ENCODE measurements at regions of chr17 and their contacts with region 1.

Region 1: DNA sequence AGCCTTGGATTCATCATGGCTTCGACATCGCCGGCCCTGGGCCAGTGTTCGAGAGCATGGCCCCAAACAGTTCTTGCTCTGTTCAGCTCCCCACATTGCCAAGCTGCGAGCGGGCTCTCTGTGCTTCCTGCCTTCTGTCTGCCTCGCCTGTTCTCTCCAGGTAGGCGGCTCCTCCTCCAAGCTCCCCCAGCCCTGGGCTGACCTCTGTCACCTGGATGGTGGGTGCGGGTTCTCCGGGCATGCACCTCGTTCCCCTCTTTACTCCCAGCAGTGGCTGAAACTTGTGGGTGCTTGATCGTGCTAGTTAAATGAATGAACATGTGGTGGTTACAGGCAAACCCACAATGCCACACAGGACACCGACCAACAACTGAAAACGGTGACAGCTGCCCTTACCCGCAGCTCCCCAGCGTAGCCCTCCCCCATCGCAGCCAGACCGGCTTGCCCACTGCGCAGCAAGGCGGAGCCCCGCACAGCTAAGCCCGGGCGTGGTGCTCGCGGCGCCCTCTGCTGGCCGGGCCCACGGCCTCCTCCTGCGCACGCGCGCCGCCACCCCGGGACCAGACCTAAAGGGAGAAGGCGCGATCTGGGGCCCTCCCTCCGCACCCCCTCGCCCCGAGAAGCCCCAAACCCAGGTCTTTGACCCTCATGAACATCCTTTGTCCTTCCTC is 23.0 kb upstream of the EIF1 start:
- DNase-seq: peak; percentile 91
- ATAC-seq: peak; percentile 89
- H3K4me3 Mint-ChIP-seq: peak overlapping the region; percentile 82
- H3K27ac Mint-ChIP-seq: peak overlapping the region; percentile 93
- H3K4me1 Mint-ChIP-seq: peaks cover 38% of the 10 kb centered on the region
- H3K27me3 Mint-ChIP-seq: peaks cover 17% of the 10 kb centered on the region

Region 2: DNA sequence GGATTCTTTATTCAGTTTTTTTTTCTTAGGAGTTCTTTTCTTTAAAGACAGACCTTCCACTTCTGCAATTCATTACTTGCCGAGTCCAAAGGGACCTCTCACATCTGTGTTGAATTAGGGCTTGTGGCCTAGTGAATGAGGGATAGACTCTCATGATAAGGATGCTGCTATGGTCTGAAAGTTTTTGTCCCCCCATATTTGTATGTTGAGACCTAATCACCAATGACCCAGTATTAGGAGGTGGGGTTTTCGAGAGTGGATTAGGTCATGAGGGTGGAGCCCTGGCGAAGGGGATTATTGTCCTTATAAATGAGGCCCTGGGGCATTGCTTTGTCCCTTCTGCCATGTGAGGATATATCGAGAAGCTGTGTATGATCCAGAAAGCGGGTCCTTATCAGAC is 808.2 kb before region 1 on chr17:
- CTCF ChIA-PET with region 1: interaction called, 23 read pairs
- POLR2A ChIA-PET with region 1: no interaction called
- DNase-seq: no peak
- ATAC-seq: no peak
- H3K4me3 Mint-ChIP-seq: no peak overlapping the region
- H3K27ac Mint-ChIP-seq: no peak overlapping the region
- H3K4me1 Mint-ChIP-seq: no peaks in the 10 kb centered on the region
- H3K27me3 Mint-ChIP-seq: peaks cover 21% of the 10 kb centered on the region

Region 3: DNA sequence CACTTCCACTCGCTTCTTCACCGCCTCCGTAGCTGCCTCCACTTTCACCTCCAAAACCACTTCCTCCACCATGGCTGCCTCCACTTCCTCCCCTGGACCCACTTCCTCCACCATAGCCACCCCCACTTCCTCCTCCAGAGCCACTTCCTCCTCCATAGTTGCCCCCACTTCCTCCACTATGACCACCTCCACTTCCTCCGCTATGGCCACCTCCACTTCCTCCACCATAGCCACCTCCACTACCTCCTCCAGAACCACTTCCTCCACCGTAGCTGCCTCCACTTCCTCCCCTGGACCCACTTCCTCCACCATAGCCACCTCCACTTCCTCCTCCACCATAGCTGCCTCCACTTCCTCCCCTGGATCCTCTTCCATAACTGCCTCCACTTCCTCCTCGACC is 98.4 kb before region 1 on chr17:
- CTCF ChIA-PET with region 1: interaction called, 11 read pairs
- POLR2A ChIA-PET with region 1: no interaction called
- DNase-seq: peak; percentile 28
- ATAC-seq: no peak
- H3K4me3 Mint-ChIP-seq: no peak overlapping the region
- H3K27ac Mint-ChIP-seq: peak overlapping the region; percentile 87
- H3K4me1 Mint-ChIP-seq: peaks cover 8% of the 10 kb centered on the region
- H3K27me3 Mint-ChIP-seq: peaks cover 26% of the 10 kb centered on the region

Region 4: DNA sequence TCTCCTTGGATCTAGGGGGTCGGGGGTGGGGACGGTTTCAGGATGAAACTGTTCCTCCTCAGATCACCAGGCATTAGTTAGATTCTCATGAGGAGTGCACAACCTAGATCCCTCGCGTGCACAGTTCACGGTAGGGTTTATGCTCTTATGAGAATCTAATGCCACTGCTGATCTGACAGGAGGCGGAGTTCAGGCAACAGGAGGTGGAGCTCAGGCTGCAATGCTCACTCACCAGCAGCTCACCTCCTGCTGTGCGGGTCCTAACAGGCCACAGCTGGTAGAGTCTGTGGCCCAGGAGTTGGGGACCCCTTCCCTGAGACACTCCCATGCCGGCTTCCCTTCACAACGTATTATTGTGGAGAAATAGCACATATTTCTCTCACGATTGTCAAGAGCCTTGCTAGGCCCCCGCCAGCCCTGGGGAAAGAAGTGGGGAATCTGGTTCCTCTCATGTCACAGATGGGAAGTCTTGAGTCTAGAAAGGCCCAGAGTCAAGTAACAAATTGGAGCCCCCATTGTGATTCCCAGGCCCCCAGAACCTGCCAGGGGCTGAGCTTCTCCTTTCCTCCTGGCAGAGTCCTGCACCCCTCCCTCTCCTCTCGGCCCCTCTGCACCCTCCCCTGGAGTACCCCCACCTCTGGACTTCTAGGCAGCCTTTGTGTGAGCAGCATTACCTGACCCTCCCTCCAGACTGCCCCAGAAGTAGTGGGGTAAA is 72.9 kb before region 1 on chr17:
- CTCF ChIA-PET with region 1: interaction called, 12 read pairs
- POLR2A ChIA-PET with region 1: no interaction called
- DNase-seq: no peak
- ATAC-seq: no peak
- H3K4me3 Mint-ChIP-seq: no peak overlapping the region
- H3K27ac Mint-ChIP-seq: no peak overlapping the region
- H3K4me1 Mint-ChIP-seq: no peaks in the 10 kb centered on the region
- H3K27me3 Mint-ChIP-seq: no peaks in the 10 kb centered on the region

Region 5: DNA sequence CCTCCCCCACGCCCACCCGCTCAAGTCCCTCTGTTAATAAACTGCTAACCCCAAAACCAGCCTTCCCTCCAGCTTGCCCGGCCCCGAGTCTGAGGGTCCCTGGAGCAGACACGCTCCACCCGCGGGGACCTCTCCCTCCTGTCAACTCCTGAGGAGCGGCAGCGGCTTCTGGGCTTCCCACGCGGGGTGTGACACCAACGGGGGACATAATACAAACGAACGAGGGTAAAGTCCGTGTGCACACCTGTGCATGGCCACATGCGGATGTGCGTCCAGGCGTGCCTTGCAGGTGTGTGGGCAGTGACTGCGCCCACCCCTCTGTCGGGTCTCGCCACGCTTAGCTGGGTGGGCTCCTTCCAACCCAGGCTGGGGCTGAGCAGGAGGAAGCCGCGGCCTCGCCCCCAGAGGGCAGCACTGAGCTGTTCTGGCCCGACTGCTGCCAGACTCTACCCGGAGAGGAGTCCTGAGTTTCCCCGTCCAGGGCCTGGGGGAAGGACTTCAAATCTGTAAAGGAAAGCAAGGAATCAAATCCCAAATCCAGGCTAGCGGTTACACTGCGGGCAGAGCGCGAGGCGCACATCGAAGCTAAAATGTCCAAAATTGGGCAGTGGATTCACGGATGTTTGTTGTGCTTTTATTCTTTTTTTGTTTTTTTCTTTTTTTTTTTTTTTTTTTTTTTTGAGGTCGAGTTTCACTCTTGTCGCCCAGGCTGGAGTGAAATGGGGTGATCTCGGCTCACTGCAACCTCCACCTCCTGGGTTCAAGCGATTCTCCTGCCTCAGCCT is 17.1 kb before region 1 on chr17:
- CTCF ChIA-PET with region 1: interaction called, 399 read pairs
- POLR2A ChIA-PET with region 1: interaction called, 3 read pairs
- DNase-seq: peak; percentile 87
- ATAC-seq: peak; percentile 89
- H3K4me3 Mint-ChIP-seq: peak overlapping the region; percentile 42
- H3K27ac Mint-ChIP-seq: peak overlapping the region; percentile 54
- H3K4me1 Mint-ChIP-seq: peaks cover 13% of the 10 kb centered on the region
- H3K27me3 Mint-ChIP-seq: no peaks in the 10 kb centered on the region

Region 6: GRCh38 chr17:41678907-41679739 is 13.4 kb after region 1 on chr17:
- CTCF ChIA-PET with region 1: interaction called, 266 read pairs
- POLR2A ChIA-PET with region 1: interaction called, 22 read pairs
- DNase-seq: peak; percentile 91
- ATAC-seq: peak; percentile 91
- H3K4me3 Mint-ChIP-seq: peak overlapping the region; percentile 84
- H3K27ac Mint-ChIP-seq: peak overlapping the region; percentile 94
- H3K4me1 Mint-ChIP-seq: peaks cover 62% of the 10 kb centered on the region
- H3K27me3 Mint-ChIP-seq: no peaks in the 10 kb centered on the region

Region 7: GRCh38 chr17:41688699-41689496 is 23.2 kb after region 1 on chr17 and contains the start of gene EIF1:
- CTCF ChIA-PET with region 1: interaction called, 266 read pairs
- POLR2A ChIA-PET with region 1: interaction called, 108 read pairs
- DNase-seq: peak; percentile 100
- ATAC-seq: peak; percentile 73
- H3K4me3 Mint-ChIP-seq: peak within 1 kb of the TSS; percentile 96
- H3K27ac Mint-ChIP-seq: peak within 1 kb of the TSS; percentile 98
- H3K4me1 Mint-ChIP-seq: peaks cover 31% of the 10 kb centered on the region
- H3K27me3 Mint-ChIP-seq: no peaks in the 10 kb centered on the region
- total RNA-seq, gene EIF1: 661 to 670 TPM